ENCODE measurements at regions of chr13 and their contacts with region 1.

Region 1: DNA sequence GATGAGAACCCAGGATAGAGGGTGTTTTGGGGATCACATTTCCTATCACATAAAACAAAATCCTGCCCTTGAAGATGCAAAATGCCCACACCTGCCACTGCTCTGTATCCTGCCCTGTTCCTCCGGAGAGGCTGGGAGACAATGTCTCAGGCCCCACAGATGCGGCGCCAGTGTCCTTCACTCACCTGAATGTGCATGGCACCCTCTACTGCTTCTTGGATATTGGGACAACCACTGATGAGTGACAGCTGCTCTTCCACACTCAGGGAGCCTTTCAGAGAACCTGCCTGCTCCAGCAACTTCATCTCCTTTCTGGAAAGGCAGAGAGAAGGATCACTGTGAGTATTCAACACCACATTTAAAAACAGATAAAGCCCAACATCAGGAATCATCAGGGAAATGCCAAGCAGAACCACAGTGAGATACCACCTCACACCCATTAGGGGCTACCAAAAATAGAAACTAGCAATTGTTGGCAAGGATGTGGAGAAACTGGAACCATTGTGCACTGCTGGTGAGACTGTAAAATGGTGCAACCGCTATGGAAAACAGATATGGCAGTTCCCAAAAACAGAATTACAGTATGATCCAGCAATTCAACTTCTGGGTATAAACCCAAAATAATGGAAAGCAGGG is 36.4 kb downstream of the CRYL1 start:
- DNase-seq: no peak
- ATAC-seq: peak; percentile 79

Region 2: GRCh38 chr13:20197361-20197834 is 291.9 kb before region 1 on chr13:
- intact Hi-C with region 1: loop called (anchors 10 kb)
- DNase-seq: no peak
- ATAC-seq: peak; percentile 45

Region 3: GRCh38 chr13:20378721-20379120 is 110.6 kb before region 1 on chr13:
- intact Hi-C with region 1: no loop called
- DNase-seq: no peak
- ATAC-seq: no peak

Region 4: GRCh38 chr13:20428666-20429644 is 60.3 kb before region 1 on chr13:
- intact Hi-C with region 1: no loop called
- DNase-seq: no peak
- ATAC-seq: no peak